Activated CD4-positive, alpha-beta memory T cell treated with anti-CD3 and anti-CD28 coated beads for 36 hours (primary cell): ENCODE measurements at regions of chr11 and their contacts with region 1.

Region 1: DNA sequence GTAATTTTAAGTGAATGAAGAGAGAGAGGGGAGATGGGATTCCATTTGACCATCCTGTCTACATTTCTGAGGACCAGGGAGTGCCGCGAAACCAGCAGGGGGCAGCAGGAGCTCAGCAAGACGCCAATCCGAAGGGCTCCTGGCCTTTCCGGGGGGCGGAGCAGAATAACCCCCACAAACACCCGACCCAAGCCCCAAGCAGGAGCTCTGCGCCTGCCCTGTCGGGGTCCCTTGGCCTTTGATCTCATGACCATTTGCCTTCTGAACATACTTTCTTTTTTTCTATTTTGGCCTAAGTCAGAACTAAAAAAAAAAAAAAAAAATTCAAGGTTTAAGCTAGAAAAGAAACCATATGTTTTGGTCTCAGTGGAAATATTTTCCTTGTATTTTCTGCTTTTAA is 21.9 kb upstream of the SCN2B start:
- DNase-seq: peak; percentile 89
- H3K4me3 Mint-ChIP-seq: peak overlapping the region; percentile 30
- H3K27ac Mint-ChIP-seq: peak overlapping the region; percentile 72
- H3K4me1 Mint-ChIP-seq: peaks cover 16% of the 10 kb centered on the region
- H3K27me3 Mint-ChIP-seq: no peaks in the 10 kb centered on the region

Region 2: DNA sequence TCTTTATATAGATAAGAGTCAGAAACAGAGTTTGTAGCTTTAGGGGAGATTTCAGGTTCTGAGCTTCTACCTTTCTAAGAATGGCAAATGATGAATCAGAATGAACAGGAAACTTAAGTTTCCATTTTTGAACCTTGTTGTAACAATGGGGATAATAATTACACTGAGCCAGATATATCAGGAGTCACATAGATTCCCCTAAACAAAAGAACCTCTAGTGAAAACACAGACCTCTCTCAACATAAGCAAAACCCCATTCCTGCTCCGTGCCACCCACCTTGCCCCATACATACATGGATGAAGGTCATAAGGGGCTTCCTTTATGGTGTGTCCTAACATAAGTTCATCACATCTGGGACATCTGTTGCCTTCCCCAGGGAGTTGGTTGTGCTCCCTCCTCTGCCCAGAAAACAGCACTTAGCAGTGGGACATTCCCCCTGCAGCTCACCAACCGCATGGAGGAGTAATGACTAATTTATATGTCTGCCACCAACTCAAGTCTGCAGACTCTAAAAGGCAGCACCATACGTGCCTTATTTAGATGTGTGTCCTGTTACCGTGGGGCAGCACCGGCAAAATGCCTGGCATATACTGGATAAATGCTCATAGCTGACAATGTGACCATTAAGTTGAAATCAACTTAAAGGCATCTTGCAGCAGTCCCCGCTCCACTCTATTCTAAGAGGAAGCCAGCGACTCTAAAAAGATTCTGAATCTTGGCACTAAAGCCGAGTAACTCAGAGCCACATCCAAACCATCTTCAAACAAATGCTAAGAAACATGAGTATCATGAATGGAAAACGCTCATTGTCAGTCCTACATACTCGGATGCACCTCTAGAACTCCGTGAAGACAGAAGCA is 18.5 kb after region 1 on chr11:
- CTCF ChIA-PET with region 1: interaction called, 13 read pairs
- POLR2A ChIA-PET with region 1: interaction called, 83 read pairs
- intact Hi-C with region 1: loop called (anchors 1 kb)
- DNase-seq: peak; percentile 78
- H3K4me3 Mint-ChIP-seq: peak overlapping the region; percentile 81
- H3K27ac Mint-ChIP-seq: peak overlapping the region; percentile 97
- H3K4me1 Mint-ChIP-seq: peaks cover 97% of the 10 kb centered on the region
- H3K27me3 Mint-ChIP-seq: no peaks in the 10 kb centered on the region

Region 3: DNA sequence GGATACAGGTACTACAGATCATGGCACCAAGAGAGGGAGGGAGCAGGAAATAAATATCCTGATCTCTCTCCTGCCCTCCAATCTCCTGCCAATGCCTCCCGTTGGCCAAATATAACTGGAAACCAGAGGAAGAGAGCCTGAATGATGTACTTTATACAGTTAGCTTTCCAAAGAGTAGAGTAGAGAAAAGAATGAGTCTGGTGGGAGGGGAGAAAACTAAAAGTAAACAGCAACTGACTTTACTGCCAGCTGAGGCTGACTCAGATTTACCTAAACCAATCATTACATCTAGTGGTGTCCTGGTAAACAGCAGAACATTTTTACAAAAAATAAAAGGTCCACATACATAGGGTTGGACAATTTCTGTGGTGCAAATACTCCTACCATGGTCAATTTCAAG is 48.7 kb after region 1 on chr11:
- CTCF ChIA-PET with region 1: interaction called, 26 read pairs
- POLR2A ChIA-PET with region 1: interaction called, 13 read pairs
- intact Hi-C with region 1: loop called (anchors 1 kb)
- DNase-seq: no peak
- H3K4me3 Mint-ChIP-seq: peak overlapping the region; percentile 11
- H3K27ac Mint-ChIP-seq: peak overlapping the region; percentile 87
- H3K4me1 Mint-ChIP-seq: peaks cover 71% of the 10 kb centered on the region
- H3K27me3 Mint-ChIP-seq: no peaks in the 10 kb centered on the region

Region 4: DNA sequence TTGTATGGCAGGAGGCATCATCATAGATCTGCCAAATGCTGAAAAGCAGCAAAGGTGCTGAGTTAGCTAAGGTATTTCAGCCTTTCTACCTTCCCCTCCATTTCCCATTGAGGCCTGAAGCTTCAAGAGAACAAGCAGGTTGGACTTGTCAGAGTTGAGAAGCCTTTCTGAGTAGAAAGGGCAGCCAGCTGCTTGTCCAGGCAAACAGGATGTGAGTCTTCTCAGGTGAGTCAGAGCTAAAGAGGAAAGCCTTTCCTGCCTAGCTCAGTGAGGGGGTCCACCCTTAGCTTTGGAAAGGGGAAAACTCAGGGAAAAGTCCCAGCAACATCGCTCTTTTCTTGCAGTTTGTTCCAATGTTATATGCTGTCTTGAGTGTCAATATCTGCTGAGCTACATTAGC is 78.9 kb after region 1 on chr11:
- CTCF ChIA-PET with region 1: interaction called, 11 read pairs
- POLR2A ChIA-PET with region 1: no interaction called
- intact Hi-C with region 1: no loop called
- DNase-seq: peak; percentile 42
- H3K4me3 Mint-ChIP-seq: no peak overlapping the region
- H3K27ac Mint-ChIP-seq: peak overlapping the region; percentile 40
- H3K4me1 Mint-ChIP-seq: peaks cover 40% of the 10 kb centered on the region
- H3K27me3 Mint-ChIP-seq: no peaks in the 10 kb centered on the region

Region 5: DNA sequence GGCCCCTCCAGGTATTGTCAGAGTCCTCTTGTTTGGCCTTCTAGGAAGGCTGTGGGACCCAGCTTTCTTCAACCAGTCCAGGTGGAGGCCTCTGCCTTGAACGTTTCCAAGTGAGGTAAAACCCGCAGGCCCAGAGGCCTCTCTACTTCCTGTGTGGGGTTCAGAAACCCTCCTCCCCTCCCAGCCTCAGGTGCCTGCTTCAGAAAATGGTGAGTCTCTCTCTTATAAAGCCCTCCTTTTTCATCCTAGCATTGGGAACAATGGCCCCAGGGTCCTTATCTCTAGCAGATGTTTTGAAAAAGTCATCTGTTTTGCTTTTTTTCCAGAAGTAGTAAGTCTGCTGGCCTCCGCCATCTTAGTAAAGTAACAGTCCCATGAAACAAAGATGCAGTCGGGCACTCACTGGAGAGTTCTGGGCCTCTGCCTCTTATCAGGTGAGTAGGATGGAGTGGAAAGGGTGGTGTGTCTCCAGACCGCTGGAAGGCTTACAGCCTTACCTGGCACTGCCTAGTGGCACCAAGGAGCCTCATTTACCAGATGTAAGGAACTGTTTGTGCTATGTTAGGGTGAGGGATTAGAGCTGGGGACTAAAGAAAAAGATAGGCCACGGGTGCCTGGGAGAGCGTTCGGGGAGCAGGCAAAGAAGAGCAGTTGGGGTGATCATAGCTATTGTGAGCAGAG is 106.3 kb after region 1 on chr11 and contains the start of gene CD3E:
- CTCF ChIA-PET with region 1: interaction called, 10 read pairs
- POLR2A ChIA-PET with region 1: interaction called, 5 read pairs
- intact Hi-C with region 1: no loop called
- DNase-seq: peak; percentile 84
- H3K4me3 Mint-ChIP-seq: peak within 1 kb of the TSS; percentile 100
- H3K27ac Mint-ChIP-seq: peak within 1 kb of the TSS; percentile 100
- H3K4me1 Mint-ChIP-seq: peaks cover 66% of the 10 kb centered on the region
- H3K27me3 Mint-ChIP-seq: no peaks in the 10 kb centered on the region
- total RNA-seq, gene CD3E: 476 to 488 TPM

Region 6: DNA sequence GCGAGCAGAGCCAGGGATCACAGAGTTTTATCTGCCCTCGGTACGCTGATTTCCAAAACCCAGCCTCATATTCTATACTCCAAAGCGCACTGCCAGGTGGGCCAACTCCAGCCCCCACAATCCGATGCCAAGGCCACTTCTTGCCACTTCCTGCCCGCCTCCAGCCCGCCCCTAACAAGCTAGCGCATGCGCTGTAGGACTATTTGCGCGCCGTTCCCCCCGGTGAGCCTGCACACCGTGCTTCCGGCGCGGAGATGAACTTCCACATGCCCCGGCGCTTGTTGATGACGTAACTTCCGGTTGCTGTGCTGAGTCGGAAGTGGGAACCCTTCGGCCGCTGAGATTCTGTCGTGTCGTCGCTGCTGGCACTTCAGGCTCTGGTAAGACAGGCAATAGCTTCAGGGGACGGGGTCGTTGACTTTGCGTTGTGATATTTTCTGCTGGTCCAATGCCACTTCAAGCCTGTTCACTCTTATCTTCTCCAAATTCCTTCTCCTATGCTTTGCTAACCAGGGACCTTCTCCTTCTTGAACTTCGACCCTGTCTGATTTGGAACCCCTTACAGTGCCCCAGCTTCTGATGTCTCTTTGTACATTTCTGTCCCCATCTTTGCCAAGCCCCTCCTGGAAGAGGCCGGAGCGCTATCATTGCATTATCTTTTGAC is 161.1 kb after region 1 on chr11 and contains the start of gene UBE4A:
- CTCF ChIA-PET with region 1: interaction called, 11 read pairs
- POLR2A ChIA-PET with region 1: no interaction called
- intact Hi-C with region 1: no loop called
- DNase-seq: peak; percentile 99
- H3K4me3 Mint-ChIP-seq: peak within 1 kb of the TSS; percentile 96
- H3K27ac Mint-ChIP-seq: peak within 1 kb of the TSS; percentile 93
- H3K4me1 Mint-ChIP-seq: peaks cover 45% of the 10 kb centered on the region
- H3K27me3 Mint-ChIP-seq: peaks cover 2% of the 10 kb centered on the region
- total RNA-seq, gene UBE4A: 39.1 to 40.4 TPM